Testis (tissue), 5 donors: ENCODE measurements at regions of chr13 and their contacts with region 1.

Region 1: DNA sequence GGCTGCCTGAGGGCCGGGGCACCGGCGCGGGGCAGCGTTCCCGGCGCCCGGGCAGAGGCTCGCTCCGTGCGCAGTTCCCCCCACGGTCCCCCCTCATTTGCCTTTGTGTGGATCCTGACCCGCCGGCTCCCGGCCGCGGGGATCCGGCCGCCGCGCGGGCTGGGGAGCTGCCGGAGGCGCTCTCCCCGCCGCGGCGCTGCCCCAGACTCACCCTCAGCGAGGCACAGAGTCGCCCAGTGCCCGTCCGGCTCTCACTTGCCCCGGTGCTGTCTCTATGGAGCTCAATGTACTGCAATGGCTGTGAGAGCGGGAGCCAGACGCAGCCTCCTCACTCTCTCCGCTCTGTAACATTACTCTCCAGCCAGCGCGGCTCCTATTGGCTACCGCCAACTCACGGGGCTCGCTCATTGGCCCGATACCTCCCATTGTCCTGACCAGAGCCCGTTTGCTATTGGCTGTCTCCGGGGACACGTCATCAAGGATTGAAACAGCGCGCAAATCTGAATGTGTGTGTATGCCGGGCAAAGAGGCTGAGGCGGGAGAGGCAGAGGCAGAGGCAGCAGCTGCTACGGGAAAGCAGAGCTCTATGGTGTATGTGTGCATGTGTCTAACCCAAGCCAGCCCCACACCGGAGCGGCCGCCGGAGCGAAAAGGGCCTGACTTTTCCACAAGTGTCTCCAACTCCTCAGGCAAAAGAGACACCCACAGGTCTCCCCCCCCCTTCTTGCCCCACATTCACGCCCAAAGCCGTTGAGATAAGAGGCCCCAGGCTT is at the start of gene HMGB1:
- DNase-seq: peak; percentile 100
- H3K4me3 ChIP-seq: peak within 1 kb of the TSS; percentile 88 to 92
- H3K27ac ChIP-seq: peak within 1 kb of the TSS; percentile 95 to 99
- H3K4me1 ChIP-seq: peaks cover 19% of the 10 kb centered on the region
- H3K27me3 ChIP-seq: no peaks in the 10 kb centered on the region
- CTCF ChIP-seq: peak in 2 of 3 experiments; percentile 5 to 15
- POLR2A ChIP-seq: peak; percentile 98
- total RNA-seq, gene HMGB1: 285 to 298 TPM

Region 2: DNA sequence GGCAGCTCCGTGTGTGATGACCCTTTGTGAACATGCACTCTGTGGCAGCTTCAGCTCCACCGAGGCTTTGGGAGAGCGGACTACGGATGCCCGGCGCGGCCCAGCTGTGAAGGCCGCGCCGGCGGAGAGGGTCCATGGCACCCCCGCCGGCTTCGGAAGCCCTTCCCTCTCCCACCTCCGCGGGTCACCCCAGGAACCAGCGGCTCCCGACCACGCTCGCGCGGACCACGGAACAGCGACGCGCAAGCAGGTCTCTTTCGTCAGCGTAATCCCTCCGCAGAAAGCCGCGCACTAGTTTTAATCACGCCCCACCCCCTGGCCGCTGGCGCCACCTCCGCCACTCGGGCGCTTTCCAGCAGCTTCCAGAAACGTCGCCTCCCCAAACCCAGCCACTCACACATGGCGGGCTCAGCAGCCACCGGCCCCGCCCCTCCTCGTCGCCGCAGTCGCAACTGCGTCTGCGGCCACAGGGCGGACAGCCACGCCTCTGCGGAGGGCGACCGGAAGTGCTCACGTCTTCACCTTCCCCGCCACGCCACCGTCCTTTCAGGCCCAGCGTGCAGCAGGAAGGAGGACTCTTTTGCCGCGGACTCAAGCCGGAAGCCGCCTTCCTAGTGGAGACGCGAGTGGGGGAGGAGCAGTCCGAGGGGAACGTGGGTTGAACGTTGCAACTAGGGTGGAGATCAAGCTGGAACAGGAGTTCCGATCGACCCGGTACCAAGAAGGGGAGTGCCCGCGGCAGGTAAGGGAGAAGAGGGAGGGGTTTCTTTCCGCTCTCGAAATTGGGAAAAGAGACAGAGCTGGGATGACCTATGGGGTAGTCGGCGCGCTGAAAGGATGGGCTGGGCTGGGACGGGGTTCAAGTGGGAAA is 151.8 kb after region 1 on chr13 and contains the start of gene USPL1:
- intact Hi-C with region 1: loop called (anchors 10 kb)
- DNase-seq: peak; percentile 98
- H3K4me3 ChIP-seq: peak within 1 kb of the TSS; percentile 90 to 97
- H3K27ac ChIP-seq: peak within 1 kb of the TSS; percentile 99 to 100
- H3K4me1 ChIP-seq: peaks cover 25% of the 10 kb centered on the region
- H3K27me3 ChIP-seq: no peaks in the 10 kb centered on the region
- CTCF ChIP-seq: peak; percentile 10 to 74 (median 62)
- POLR2A ChIP-seq: peak; percentile 93
- total RNA-seq, gene USPL1: 36.0 to 52.0 TPM